Endothelial cell of umbilical vein (primary cell): ENCODE measurements at regions of chr20 and their contacts with region 1.

Region 1: GRCh38 chr20:51212816-51213215 is 189.9 kb upstream of the KCNG1 start:
- DNase-seq: no peak
- H3K4me3 ChIP-seq: no peak overlapping the region
- H3K27ac ChIP-seq: no peak overlapping the region
- H3K4me1 ChIP-seq: no peaks in the 10 kb centered on the region
- H3K27me3 ChIP-seq: peaks cover 21 to 32% of the 10 kb centered on the region in 2 experiments
- CTCF ChIP-seq: no peak
- POLR2A ChIP-seq: no peak

Region 2: GRCh38 chr20:51156041-51156982 is 56.5 kb before region 1 on chr20:
- CTCF ChIA-PET with region 1: no interaction called
- POLR2A ChIA-PET with region 1: no interaction called
- dilution Hi-C with region 1: no loop called
- intact Hi-C with region 1: loop called (anchors 2 kb)
- DNase-seq: no peak
- H3K4me3 ChIP-seq: no peak overlapping the region
- H3K27ac ChIP-seq: no peak overlapping the region
- H3K4me1 ChIP-seq: no peaks in the 10 kb centered on the region
- H3K27me3 ChIP-seq: peaks cover 11 to 15% of the 10 kb centered on the region in 2 experiments
- CTCF ChIP-seq: no peak
- POLR2A ChIP-seq: no peak

Region 3: GRCh38 chr20:51469578-51470498 is 257.0 kb after region 1 on chr20:
- CTCF ChIA-PET with region 1: no interaction called
- POLR2A ChIA-PET with region 1: no interaction called
- dilution Hi-C with region 1: no loop called
- intact Hi-C with region 1: no loop called
- DNase-seq: peak; percentile 80
- H3K4me3 ChIP-seq: no peak overlapping the region
- H3K27ac ChIP-seq: no peak overlapping the region
- H3K4me1 ChIP-seq: peaks cover 2% of the 10 kb centered on the region
- H3K27me3 ChIP-seq: no peaks in the 10 kb centered on the region
- CTCF ChIP-seq: no peak
- POLR2A ChIP-seq: no peak